Esophagus squamous epithelium (tissue), 5 donors: ENCODE measurements at regions of chr1 and their contacts with region 1.

Region 1: GRCh38 chr1:89804642-89805237 is 16.1 kb upstream of the LRRC8D start:
- DNase-seq: peak; percentile 32
- H3K4me3 ChIP-seq: no peak overlapping the region
- H3K27ac ChIP-seq: no peak overlapping the region
- H3K4me1 ChIP-seq: peaks cover 0 to 19% (median 6%) of the 10 kb centered on the region in 3 donors
- H3K27me3 ChIP-seq: no peaks in the 10 kb centered on the region
- CTCF ChIP-seq: peak; percentile 81 to 92 (median 89)
- POLR2A ChIP-seq: no peak

Region 2: DNA sequence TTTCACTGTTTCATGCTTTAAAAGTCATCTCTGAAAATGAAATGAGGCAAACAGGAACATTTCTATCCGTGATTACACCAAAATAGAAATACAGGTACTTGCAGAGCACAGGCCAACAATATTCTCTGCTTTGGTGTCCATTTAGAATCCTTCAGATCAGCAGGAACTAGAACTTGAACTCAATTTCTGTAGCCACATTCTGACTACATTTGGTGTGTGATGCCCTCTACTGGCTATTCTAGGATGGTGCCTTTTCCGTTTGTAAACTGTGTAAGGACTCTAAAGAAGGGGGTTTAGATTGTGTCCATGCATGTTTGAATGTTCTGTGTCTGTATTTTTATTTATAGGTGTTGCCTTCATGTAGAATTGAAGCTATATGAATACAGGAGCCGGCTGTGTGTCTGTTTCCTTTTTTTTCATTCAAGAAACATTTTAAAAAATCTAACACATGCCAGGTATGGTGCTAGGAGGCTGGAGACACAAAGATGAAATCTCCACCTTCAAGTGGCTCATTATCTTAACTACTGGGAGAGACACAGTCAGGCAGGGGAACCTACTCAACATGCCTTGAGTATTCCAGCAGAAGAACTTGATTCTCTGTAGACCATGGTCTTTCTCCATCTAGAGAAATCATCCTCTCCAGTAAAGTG is 182.6 kb after region 1 on chr1:
- intact Hi-C with region 1: loop called (anchors 5 kb)
- DNase-seq: no peak
- H3K4me3 ChIP-seq: no peak overlapping the region
- H3K27ac ChIP-seq: no peak overlapping the region
- H3K4me1 ChIP-seq: peaks cover 0 to 27% (median 0%) of the 10 kb centered on the region in 3 donors
- H3K27me3 ChIP-seq: no peaks in the 10 kb centered on the region
- CTCF ChIP-seq: peak; percentile 76 to 90 (median 84)
- POLR2A ChIP-seq: no peak

Region 3: DNA sequence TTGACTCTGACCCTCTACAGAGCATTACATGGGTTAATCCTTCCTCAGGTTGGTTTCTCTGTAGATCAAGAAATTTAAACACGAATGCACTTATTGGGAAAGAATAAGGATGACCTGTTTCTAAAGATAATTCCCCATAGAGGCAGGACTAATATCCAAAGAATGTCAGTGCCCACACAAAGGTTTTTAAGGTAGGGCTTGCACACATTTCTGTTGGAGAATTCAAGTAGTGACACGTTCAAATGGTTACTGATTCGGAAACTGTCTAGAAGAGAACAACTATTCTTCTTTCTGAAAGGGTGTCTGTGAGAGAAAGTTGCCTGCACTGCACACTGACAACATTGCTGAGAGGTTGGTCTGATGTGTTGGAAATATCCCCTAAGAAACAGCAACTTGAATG is 357.5 kb after region 1 on chr1:
- intact Hi-C with region 1: no loop called
- DNase-seq: no peak
- H3K4me3 ChIP-seq: no peak overlapping the region
- H3K27ac ChIP-seq: no peak overlapping the region
- H3K4me1 ChIP-seq: no peaks in the 10 kb centered on the region
- H3K27me3 ChIP-seq: no peaks in the 10 kb centered on the region
- CTCF ChIP-seq: no peak
- POLR2A ChIP-seq: no peak